CD14-positive monocyte (primary cell): ENCODE measurements at regions of chr2 and their contacts with region 1.

Region 1: DNA sequence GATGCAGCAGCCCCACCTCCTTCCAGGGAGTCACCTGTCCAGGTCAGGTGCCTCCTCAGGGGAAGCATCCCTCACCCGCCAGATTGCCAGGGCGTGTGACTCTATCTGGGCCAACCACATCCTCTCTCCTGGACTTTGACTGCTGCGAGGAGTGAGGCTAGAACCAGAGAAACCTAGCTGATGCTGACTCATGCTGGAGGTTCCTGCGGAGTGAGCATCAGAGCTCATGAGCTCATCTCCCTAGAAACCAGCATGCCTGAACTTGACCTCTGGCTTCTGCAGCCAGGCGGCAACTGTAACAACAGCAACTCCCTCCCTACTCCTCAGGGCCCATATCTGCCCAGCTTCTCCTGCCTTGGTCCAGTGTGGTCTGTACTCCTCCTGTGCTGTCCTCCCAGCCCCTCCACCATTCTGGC is 28.3 kb upstream of the NT5DC4 start:
- DNase-seq: peak; percentile 90 to 96 (median 91)
- H3K4me3 ChIP-seq: peak overlapping the region in 1 of 3 experiments; percentile 3
- H3K4me3 Mint-ChIP-seq: peak overlapping the region; percentile 49
- H3K27ac ChIP-seq: peak overlapping the region; percentile 84 to 89
- H3K27ac Mint-ChIP-seq: peak overlapping the region; percentile 94 to 99 (median 97)
- H3K4me1 ChIP-seq: peaks cover 46 to 57% of the 10 kb centered on the region in 2 donors
- H3K4me1 Mint-ChIP-seq: peaks cover 53% of the 10 kb centered on the region
- H3K27me3 ChIP-seq: no peaks in the 10 kb centered on the region
- H3K27me3 Mint-ChIP-seq: peaks cover 0 to 3% (median 0%) of the 10 kb centered on the region in 3 donors
- CTCF ChIP-seq: no peak

Region 2: DNA sequence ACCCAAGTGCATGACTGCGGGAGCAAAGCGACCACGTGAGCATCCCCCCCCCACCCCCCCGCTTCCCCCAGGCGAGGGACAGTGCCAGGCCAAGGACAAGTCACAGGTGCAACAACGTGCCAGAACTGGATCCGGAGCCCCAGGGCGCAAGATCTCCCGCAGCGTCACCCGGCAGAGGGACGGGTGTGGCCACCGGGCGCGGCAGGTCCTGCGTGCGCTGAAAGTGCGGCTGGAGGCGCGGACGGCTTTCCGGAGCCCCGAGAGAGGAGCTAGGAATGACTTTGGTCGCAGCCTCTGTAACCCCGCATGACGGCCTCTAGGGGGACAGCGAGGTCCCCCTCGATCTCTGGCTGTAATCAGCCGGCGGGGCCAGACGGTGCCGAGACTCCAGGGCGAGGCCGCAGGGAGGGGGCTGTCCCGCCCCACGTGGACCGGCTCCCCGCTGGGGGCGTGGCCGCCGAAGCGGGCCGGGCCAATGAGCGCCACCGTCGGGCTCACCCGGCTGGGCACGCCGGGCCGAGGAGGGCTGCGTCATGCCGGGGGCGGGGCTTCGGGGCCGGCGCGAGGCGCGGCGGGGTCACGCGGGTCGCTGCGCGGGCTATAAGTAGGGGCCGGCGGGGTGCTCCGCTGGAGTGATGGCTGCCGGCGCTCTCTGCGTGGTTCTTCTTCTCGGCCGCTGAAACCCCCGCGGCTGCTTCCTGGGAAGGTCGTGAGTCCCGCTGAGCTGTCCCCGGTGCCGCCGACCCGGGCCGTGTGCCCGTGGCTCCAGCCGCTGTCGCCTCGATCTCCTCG is 47.0 kb before region 1 on chr2 and contains the start of gene SLC20A1:
- intact Hi-C with region 1: loop called (anchors 5 kb)
- DNase-seq: peak; percentile 92 to 97 (median 95)
- H3K4me3 ChIP-seq: peak within 1 kb of the TSS; percentile 76 to 99 (median 88)
- H3K4me3 Mint-ChIP-seq: peak within 1 kb of the TSS; percentile 89 to 95
- H3K27ac ChIP-seq: peak within 1 kb of the TSS; percentile 90 to 92
- H3K27ac Mint-ChIP-seq: peak within 1 kb of the TSS; percentile 87 to 95 (median 92)
- H3K4me1 ChIP-seq: peaks cover 41 to 55% of the 10 kb centered on the region in 2 donors
- H3K4me1 Mint-ChIP-seq: peaks cover 73% of the 10 kb centered on the region
- H3K27me3 ChIP-seq: no peaks in the 10 kb centered on the region
- H3K27me3 Mint-ChIP-seq: peaks cover 0 to 2% (median 0%) of the 10 kb centered on the region in 3 donors
- CTCF ChIP-seq: peak; percentile 26
- polyA plus RNA-seq, gene SLC20A1: 16.1 to 112 (median 36.3) TPM

Region 3: GRCh38 chr2:112726497-112727190 is 34.1 kb after region 1 on chr2:
- intact Hi-C with region 1: loop called in 1 of 2 experiments (anchors 5 kb)
- DNase-seq: peak; percentile 94 to 96 (median 95)
- H3K4me3 ChIP-seq: no peak overlapping the region
- H3K4me3 Mint-ChIP-seq: no peak overlapping the region
- H3K27ac ChIP-seq: peak overlapping the region in 1 of 2 donors; percentile 54
- H3K27ac Mint-ChIP-seq: peak overlapping the region in 4 of 7 donors; percentile 78 to 85 (median 80)
- H3K4me1 ChIP-seq: peaks cover 63 to 69% of the 10 kb centered on the region in 2 donors
- H3K4me1 Mint-ChIP-seq: peaks cover 58% of the 10 kb centered on the region
- H3K27me3 ChIP-seq: no peaks in the 10 kb centered on the region
- H3K27me3 Mint-ChIP-seq: peaks cover 0 to 2% (median 0%) of the 10 kb centered on the region in 3 donors
- CTCF ChIP-seq: peak; percentile 97

Region 4: DNA sequence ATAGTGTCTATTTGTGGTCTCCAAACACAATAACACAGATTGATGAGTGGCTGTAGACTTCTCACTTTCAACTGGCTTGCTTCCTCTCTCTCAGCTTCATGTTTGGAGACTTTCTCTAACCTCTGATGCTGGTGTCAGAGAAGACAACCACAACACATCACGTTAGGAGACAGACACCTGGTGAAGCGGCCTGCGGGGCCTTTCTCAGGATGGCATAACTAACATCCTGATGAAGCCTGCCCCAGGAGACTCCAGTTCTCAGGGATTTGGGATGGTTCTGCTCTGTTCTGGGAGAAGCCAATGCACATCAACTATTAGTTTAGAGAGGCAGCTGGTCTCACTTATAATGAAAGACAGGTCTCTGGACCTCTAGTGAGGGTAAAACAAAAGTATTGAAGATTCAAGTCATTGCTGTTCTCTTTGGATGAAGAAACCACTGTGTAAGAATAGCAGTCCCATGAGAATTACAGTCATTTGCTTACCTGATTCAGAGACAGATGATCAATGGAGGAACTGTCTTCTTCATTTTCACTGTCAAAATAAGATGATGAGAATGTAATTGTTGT is 89.8 kb after region 1 on chr2:
- intact Hi-C with region 1: no loop called
- DNase-seq: no peak
- H3K4me3 ChIP-seq: no peak overlapping the region
- H3K4me3 Mint-ChIP-seq: no peak overlapping the region
- H3K27ac ChIP-seq: no peak overlapping the region
- H3K27ac Mint-ChIP-seq: peak overlapping the region in 1 of 7 donors; percentile 66
- H3K4me1 ChIP-seq: peaks cover 26 to 43% of the 10 kb centered on the region in 2 donors
- H3K4me1 Mint-ChIP-seq: peaks cover 33% of the 10 kb centered on the region
- H3K27me3 ChIP-seq: no peaks in the 10 kb centered on the region
- H3K27me3 Mint-ChIP-seq: peaks cover 0 to 9% (median 4%) of the 10 kb centered on the region in 3 donors
- CTCF ChIP-seq: no peak